Activated naive CD4-positive, alpha-beta T cell treated with anti-CD3 and anti-CD28 coated beads, Interleukin-2, amount 10 ng/mL, durations not matched to agents 7 days and 5 days (primary cell): ENCODE measurements at regions of chr1 and their contacts with region 1.

Region 1: DNA sequence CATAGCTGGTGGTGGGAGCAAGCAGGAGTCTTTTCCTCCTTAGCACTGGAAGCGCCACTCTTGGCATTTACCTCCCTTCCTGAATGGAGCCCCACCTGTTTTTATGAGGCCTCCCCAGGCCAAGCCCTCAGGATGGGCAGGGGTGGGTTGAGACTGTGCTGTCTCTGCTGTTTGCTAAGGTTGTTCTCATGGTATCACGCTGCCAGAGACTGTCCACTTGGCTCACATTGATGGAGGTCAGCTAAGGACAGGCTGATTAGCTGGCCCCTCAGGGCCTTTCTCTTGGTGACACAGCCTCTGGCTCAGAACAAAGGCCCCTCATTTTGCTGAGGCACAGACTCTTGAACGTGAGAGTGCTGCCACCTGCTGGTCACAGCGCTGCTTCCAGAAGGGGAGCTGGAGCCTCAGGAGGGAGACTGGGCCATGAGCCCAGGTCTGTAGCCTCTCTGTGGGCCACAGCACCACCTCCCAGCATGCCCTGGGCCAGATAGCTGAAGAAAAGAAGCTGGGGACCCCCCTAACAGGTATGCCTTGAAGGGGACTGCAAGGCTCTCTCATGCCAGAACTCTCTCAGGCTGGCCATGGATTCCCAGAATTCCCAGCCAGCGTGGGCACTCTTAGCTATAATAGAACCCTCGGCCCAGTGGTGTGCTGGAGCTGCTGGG is 85.6 kb downstream of the CD58 start:
- DNase-seq: peak; percentile 92
- H3K4me3 Mint-ChIP-seq: no peak overlapping the region
- H3K27ac Mint-ChIP-seq: no peak overlapping the region
- H3K4me1 Mint-ChIP-seq: peaks cover 3% of the 10 kb centered on the region
- H3K27me3 Mint-ChIP-seq: peaks cover 17% of the 10 kb centered on the region

Region 2: GRCh38 chr1:116139592-116140134 is 345.5 kb before region 1 on chr1:
- CTCF ChIA-PET with region 1: interaction called, 506 read pairs
- DNase-seq: no peak
- H3K4me3 Mint-ChIP-seq: no peak overlapping the region
- H3K27ac Mint-ChIP-seq: no peak overlapping the region
- H3K4me1 Mint-ChIP-seq: peaks cover 7% of the 10 kb centered on the region
- H3K27me3 Mint-ChIP-seq: peaks cover 13% of the 10 kb centered on the region

Region 3: DNA sequence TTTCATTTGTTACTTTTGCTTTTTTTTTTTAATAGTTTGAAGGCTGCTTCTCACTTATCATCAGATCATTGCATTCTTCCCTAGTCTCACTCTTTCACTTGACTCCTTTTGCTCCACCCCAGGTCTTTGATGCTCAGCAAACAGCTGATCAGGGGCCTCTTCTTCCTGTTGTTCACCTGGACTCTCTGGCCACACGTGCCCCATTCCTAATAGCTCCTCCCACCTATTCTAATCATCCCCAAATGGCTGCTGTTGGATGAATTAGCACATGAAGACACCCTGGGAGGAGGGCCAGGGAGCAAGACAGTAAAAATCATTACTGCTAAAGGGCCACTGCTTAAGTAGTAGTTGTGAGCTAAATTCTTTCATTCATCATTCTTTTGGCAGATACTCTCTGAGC is 254.5 kb before region 1 on chr1:
- CTCF ChIA-PET with region 1: interaction called, 23 read pairs
- DNase-seq: no peak
- H3K4me3 Mint-ChIP-seq: no peak overlapping the region
- H3K27ac Mint-ChIP-seq: no peak overlapping the region
- H3K4me1 Mint-ChIP-seq: peaks cover 15% of the 10 kb centered on the region
- H3K27me3 Mint-ChIP-seq: no peaks in the 10 kb centered on the region

Region 4: GRCh38 chr1:116474921-116475849 is 10.0 kb before region 1 on chr1:
- CTCF ChIA-PET with region 1: interaction called, 23 read pairs
- DNase-seq: no peak
- H3K4me3 Mint-ChIP-seq: no peak overlapping the region
- H3K27ac Mint-ChIP-seq: no peak overlapping the region
- H3K4me1 Mint-ChIP-seq: no peaks in the 10 kb centered on the region
- H3K27me3 Mint-ChIP-seq: no peaks in the 10 kb centered on the region

Region 5: DNA sequence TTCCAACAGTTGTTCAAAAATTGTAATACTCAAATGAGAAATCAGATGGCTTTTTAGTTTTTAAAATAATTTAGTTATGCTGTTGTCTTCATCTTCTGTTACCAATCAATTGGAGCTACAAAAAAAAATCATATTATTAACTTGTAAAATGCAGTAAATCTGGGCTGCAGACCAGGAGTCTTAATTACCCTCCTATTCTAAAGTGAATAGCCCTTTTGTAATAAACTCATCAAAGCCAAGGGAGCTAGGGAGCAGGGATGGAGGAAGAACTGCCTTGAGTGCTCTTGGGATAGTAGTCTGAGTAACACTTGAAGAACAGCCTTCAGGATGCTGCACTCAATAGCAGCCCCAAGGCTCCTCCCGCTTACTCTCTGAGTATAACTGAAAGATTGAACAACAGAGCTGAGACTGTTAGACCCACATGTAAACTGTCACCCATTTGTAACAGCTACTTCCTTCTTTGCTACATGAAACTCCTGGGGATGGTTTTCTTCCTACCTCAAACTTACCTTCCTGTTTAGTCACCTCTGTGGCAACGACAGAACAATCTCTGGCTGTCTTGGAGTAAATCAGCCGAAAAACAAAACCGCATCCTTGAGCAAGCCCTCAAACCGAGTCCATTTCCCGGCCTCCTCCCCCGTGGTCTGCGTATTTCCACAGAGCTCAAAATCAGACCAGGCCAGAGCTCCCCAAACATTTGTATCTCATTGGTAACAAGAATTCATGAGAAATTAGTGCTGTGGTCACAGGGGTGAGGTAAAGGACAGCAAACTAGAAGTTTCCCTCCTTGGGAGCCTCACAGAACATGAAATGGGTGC is 29.7 kb after region 1 on chr1:
- CTCF ChIA-PET with region 1: interaction called, 11 read pairs
- DNase-seq: peak; percentile 74
- H3K4me3 Mint-ChIP-seq: peak overlapping the region; percentile 42
- H3K27ac Mint-ChIP-seq: peak overlapping the region; percentile 93
- H3K4me1 Mint-ChIP-seq: peaks cover 69% of the 10 kb centered on the region
- H3K27me3 Mint-ChIP-seq: no peaks in the 10 kb centered on the region